RWPE1 (cell line): ENCODE measurements at regions of chr1 and their contacts with region 1.

Region 1: GRCh38 chr1:181936768-181937581 is 124.5 kb downstream of the ZNF648 start:
- DNase-seq: peak; percentile 61
- H3K27ac ChIP-seq: no peak overlapping the region
- CTCF ChIP-seq: peak; percentile 63

Region 2: GRCh38 chr1:181469829-181470228 is 467.1 kb before region 1 on chr1:
- CTCF ChIA-PET with region 1: interaction called, 12 read pairs
- POLR2A ChIA-PET with region 1: no interaction called
- DNase-seq: peak; percentile 88
- H3K27ac ChIP-seq: no peak overlapping the region
- CTCF ChIP-seq: no peak

Region 3: DNA sequence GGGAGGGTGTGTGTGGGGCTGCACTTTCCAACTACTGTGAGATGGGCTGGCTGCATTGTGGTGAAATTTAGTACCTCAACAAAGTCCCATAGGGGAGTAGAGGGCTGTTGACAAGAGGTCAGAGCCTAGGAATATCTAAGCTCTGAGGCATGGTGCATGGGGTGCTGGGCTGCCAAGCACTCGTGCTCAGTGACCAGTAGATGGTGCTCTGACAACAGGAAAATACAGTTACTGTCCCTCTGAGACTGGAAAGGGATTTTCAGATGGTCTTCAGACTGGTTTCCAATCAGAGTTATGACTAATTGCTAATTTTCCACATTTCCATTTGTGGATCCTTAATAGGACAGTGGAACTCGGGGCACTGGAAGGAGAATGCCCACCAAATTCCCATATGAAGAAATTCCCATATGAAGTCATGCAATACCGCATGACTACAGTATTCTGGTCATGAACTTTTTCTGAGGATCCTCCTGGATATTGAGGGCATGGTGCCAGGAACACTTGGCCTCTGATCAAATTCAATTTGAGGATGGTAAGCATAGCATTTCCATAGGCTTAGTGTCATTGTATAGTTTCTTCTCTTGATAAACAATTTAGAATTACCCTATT is 457.7 kb before region 1 on chr1:
- CTCF ChIA-PET with region 1: interaction called, 17 read pairs
- POLR2A ChIA-PET with region 1: no interaction called
- DNase-seq: peak; percentile 73
- H3K27ac ChIP-seq: no peak overlapping the region
- CTCF ChIP-seq: peak; percentile 66

Region 4: DNA sequence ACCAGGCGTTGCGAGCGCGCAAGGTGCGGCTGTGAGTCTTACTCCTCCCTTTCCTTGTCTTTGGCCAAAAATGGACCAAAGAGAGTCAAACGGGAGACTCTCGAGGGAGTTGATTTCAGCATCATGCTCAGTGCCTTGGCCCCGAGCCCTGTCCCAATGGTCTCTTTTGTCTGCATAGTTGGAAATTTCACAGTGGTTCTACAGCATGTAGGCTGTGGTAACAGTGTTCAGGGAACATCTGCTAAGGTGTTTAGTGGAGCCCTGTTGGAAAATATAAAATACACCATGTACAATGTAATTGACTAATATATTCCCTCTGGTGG is 450.9 kb before region 1 on chr1:
- CTCF ChIA-PET with region 1: interaction called, 12 read pairs
- POLR2A ChIA-PET with region 1: no interaction called
- DNase-seq: no peak
- H3K27ac ChIP-seq: no peak overlapping the region
- CTCF ChIP-seq: no peak